ENCODE measurements at regions of chr1 and their contacts with region 1.

Region 1: DNA sequence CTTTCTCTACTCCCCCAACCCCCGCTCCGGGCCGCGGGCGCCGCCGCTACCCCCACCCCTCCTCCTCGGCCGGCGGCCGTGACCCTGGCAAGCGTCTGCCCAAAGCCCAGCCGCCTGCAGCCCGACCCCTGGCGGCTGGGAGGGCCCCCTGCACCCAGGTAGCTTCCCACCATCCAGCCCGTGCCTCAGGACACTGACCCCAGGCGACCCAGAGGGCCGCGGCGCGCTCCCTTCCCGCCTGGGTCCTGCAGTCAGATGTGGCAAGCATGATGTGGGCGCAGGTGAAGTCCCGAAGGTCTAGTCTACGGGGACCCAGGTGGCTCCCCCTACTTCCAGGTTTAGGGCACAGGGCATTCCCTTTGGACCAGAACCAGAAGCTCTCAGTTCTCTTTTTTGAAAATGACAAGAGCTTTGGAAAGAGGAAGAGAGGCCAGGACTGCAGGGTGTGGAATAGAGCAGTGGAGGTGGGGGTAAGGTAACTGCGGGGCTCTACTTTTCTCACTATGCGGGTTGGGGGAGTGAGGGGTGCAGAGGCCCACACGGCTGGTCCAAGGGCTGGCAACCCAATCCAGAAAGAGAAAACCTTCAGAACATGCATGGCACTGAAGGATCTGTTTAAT is at the start of gene DENND4B:
- DNase-seq: no peak
- H3K4me3 ChIP-seq: peak within 1 kb of the TSS; percentile 77
- CTCF ChIP-seq: peak; percentile 98

Region 2: DNA sequence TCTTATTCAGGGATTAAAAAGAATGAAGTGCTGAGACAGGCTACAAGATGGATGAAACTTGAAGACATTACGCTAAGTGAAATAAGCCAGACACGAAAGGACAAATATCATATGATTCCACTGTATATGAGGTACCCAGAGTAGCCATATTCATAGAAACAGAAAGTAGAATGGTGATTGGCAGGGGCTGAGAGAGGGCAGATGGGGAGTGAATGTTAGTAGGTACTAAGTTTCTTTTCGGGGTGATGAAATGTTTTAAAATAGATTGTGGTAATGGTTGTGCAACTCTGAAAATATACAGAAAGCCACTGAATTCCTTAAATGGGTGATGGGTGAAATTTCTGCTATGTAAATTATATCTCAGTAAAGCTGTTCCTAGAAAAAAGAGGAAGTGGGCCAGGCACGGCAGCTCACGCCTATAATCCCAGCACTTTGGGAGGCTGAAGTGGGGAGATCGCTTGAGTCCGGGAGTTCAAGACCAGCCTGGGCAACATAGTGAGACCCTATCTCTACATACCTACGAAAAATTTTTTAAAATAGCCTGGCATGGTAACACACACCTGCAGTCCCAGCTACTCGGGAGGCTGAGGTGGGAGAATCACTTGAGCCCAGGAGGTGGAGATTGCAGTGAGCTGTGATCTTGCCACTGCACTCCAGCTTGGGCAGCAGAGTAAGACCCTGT is 155.6 kb before region 1 on chr1:
- CTCF ChIA-PET with region 1: interaction called, 20 read pairs
- POLR2A ChIA-PET with region 1: no interaction called
- DNase-seq: peak; percentile 72
- H3K4me3 ChIP-seq: peak overlapping the region; percentile 32
- CTCF ChIP-seq: no peak

Region 3: GRCh38 chr1:153827168-153827964 is 119.4 kb before region 1 on chr1:
- CTCF ChIA-PET with region 1: interaction called, 14 read pairs
- POLR2A ChIA-PET with region 1: no interaction called
- DNase-seq: no peak
- H3K4me3 ChIP-seq: no peak overlapping the region
- CTCF ChIP-seq: no peak

Region 4: GRCh38 chr1:153928791-153929341 is 17.9 kb before region 1 on chr1:
- CTCF ChIA-PET with region 1: interaction called, 34 read pairs
- POLR2A ChIA-PET with region 1: interaction called, 13 read pairs
- DNase-seq: no peak
- H3K4me3 ChIP-seq: no peak overlapping the region
- CTCF ChIP-seq: no peak

Region 5: GRCh38 chr1:153967082-153968000 is 20.6 kb after region 1 on chr1 and contains the start of gene CREB3L4:
- CTCF ChIA-PET with region 1: interaction called, 26 read pairs
- POLR2A ChIA-PET with region 1: interaction called, 14 read pairs
- DNase-seq: peak; percentile 90
- H3K4me3 ChIP-seq: peak within 1 kb of the TSS; percentile 73
- CTCF ChIP-seq: peak; percentile 59

Region 6: GRCh38 chr1:154117642-154118041 is 170.9 kb after region 1 on chr1:
- CTCF ChIA-PET with region 1: no interaction called
- POLR2A ChIA-PET with region 1: no interaction called
- DNase-seq: no peak
- H3K4me3 ChIP-seq: no peak overlapping the region
- CTCF ChIP-seq: no peak

Measured in AG04449 (cell line).